Esophagus muscularis mucosa (tissue), 4 donors: ENCODE measurements at regions of chr14 and their contacts with region 1.

Region 1: GRCh38 chr14:105448706-105449111 is 25.9 kb upstream of the CRIP2 start:
- DNase-seq: no peak
- H3K4me3 ChIP-seq: peak overlapping the region in 2 of 4 donors; percentile 25 to 33
- H3K27ac ChIP-seq: peak overlapping the region; percentile 30 to 64 (median 44)
- H3K4me1 ChIP-seq: peaks cover 17 to 24% (median 21%) of the 10 kb centered on the region in 4 donors
- H3K27me3 ChIP-seq: no peaks in the 10 kb centered on the region
- CTCF ChIP-seq: peak in 2 of 3 experiments; percentile 88 to 91
- EP300 ChIP-seq: no peak
- POLR2A ChIP-seq: no peak

Region 2: DNA sequence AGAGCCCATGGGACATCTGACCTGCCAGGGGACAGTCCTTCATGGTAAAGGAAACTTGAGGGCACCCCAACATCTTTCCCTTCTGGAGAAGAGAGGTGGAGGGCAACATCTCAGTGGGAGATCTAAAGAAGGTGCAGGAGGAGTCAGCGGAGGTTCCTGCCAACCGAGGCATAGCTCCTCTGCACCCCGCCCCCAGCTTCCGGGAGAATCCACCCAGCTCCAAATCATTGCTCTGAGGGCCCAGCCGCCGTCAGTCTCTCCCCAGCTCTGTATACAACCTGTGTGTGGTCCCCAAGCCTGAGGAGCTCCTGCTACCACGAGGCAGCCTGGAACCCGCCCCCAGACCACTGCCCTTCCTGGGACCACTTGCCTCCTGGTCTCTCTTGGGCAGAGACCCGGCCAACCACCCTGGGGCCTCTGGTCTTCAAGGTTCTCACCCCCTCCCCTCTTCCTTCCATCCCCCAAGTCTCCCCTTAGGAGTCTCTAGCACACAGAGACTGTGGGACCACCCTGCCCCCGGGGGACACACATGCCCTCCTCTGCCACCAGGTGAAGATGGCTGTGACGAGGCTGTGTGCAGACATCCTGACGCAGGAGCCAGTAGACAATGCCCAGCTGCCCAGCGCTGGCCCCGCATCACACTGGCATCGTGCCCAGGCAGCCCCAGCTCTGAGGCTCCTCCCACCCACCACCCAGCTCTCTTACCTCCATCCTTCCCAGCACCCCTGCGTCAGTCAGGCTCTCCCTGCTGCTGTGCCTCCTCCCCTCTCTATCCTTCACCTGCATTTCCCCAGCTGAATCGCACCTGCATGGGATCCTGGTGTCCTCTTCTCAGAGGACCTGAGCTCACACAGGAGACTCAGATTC is 254.6 kb before region 1 on chr14:
- intact Hi-C with region 1: no loop called
- DNase-seq: no peak
- H3K4me3 ChIP-seq: no peak overlapping the region
- H3K27ac ChIP-seq: peak overlapping the region in 3 of 4 donors; percentile 44 to 62 (median 45)
- H3K4me1 ChIP-seq: peaks cover 53 to 64% (median 56%) of the 10 kb centered on the region in 4 donors
- H3K27me3 ChIP-seq: peaks cover 0 to 86% (median 48%) of the 10 kb centered on the region in 4 donors
- CTCF ChIP-seq: no peak
- EP300 ChIP-seq: no peak
- POLR2A ChIP-seq: no peak

Region 3: GRCh38 chr14:105275267-105275946 is 173.3 kb before region 1 on chr14:
- intact Hi-C with region 1: no loop called
- DNase-seq: no peak
- H3K4me3 ChIP-seq: no peak overlapping the region
- H3K27ac ChIP-seq: no peak overlapping the region
- H3K4me1 ChIP-seq: peaks cover 0 to 16% (median 13%) of the 10 kb centered on the region in 4 donors
- H3K27me3 ChIP-seq: no peaks in the 10 kb centered on the region
- CTCF ChIP-seq: no peak
- EP300 ChIP-seq: no peak
- POLR2A ChIP-seq: no peak

Region 4: DNA sequence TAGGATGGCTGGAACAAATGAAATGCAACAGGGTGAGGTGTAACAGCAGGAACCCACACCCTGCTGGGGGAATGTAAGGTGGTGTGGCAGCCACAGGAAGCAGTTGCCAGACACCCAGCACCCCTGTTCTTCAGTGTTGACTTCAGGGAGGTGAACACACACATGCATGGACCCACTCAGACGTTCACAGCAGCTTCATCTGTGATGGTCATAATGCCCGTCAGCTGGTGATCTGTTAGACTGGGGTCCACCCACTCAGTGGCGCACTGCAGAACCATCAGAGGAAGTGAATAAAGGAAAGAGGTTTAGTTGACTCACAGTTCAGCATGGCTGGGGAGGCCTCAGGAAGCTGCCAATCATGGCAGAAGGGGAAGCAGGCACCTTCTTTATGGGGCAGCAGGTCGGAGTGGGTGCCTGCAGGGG is 73.1 kb before region 1 on chr14:
- intact Hi-C with region 1: loop called (anchors 5 kb)
- DNase-seq: no peak
- H3K4me3 ChIP-seq: no peak overlapping the region
- H3K27ac ChIP-seq: no peak overlapping the region
- H3K4me1 ChIP-seq: peaks cover 0 to 6% (median 2%) of the 10 kb centered on the region in 4 donors
- H3K27me3 ChIP-seq: no peaks in the 10 kb centered on the region
- CTCF ChIP-seq: no peak
- EP300 ChIP-seq: no peak
- POLR2A ChIP-seq: no peak

Region 5: GRCh38 chr14:105490572-105491366 is 42.1 kb after region 1 on chr14 and contains the start of gene TEDC1:
- intact Hi-C with region 1: loop called (anchors 5 kb)
- DNase-seq: peak; percentile 100
- H3K4me3 ChIP-seq: peak within 1 kb of the TSS; percentile 68 to 75 (median 74)
- H3K27ac ChIP-seq: peak within 1 kb of the TSS; percentile 93 to 99 (median 96)
- H3K4me1 ChIP-seq: peaks cover 55 to 68% (median 58%) of the 10 kb centered on the region in 4 donors
- H3K27me3 ChIP-seq: peaks cover 0 to 14% (median 0%) of the 10 kb centered on the region in 4 donors
- CTCF ChIP-seq: peak; percentile 88 to 96 (median 96)
- EP300 ChIP-seq: no peak
- POLR2A ChIP-seq: no peak
- total RNA-seq, gene TEDC1: 3.8 to 6.6 (median 4.7) TPM

Region 6: DNA sequence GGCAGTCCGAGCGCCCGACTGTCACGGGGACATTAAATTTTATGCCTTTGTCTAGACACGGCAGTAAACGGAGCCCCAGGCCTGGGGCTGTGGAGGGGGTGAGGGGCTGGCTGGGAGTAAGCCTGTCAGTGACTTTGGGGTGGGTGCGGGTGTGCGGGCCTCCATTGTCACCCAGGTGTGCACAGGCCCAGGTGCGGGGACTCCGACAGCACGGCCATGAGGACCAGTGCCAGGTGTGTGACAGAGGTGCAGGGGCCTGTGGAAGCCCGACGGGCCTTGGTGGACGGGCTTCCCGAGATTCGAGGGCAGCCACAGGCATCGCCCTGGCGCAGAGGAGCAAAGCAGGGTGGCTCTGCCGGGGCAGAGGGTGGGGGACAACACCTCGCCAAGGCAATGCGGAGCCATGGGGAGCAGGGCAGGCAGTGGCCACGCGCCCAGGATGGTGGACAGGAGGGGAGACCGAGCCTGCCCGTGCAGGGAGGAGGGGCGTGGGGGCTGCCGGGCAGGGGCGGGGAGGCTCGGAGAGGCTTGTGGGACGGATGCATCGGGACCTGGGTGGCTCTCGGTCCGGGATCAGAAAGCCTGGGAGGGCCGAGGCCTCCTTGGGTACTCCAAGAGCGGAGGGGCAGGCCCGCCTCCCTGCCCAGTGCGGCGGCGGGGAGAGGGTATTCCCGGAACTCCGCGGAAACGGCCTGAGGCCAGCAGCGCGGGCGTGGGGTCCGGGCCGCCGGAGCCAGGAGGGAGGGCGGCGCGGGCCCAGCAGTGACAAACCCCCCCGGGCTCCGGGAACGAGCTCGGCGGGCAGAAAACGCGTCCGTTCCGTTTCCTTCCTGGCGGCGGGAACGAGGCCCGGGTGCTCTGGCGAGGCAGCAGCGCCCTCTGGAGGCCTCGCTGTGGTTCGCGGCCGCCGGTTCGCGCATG is 79.2 kb after region 1 on chr14:
- intact Hi-C with region 1: loop called (anchors 2 kb)
- DNase-seq: no peak
- H3K4me3 ChIP-seq: peak overlapping the region; percentile 66 to 83 (median 77)
- H3K27ac ChIP-seq: peak overlapping the region; percentile 62 to 81 (median 72)
- H3K4me1 ChIP-seq: peaks cover 27 to 49% (median 40%) of the 10 kb centered on the region in 4 donors
- H3K27me3 ChIP-seq: peaks cover 0 to 11% (median 0%) of the 10 kb centered on the region in 4 donors
- CTCF ChIP-seq: peak; percentile 84 to 94 (median 90)
- EP300 ChIP-seq: no peak
- POLR2A ChIP-seq: no peak